ENCODE measurements at regions of chr19 and their contacts with region 1.

Region 1: DNA sequence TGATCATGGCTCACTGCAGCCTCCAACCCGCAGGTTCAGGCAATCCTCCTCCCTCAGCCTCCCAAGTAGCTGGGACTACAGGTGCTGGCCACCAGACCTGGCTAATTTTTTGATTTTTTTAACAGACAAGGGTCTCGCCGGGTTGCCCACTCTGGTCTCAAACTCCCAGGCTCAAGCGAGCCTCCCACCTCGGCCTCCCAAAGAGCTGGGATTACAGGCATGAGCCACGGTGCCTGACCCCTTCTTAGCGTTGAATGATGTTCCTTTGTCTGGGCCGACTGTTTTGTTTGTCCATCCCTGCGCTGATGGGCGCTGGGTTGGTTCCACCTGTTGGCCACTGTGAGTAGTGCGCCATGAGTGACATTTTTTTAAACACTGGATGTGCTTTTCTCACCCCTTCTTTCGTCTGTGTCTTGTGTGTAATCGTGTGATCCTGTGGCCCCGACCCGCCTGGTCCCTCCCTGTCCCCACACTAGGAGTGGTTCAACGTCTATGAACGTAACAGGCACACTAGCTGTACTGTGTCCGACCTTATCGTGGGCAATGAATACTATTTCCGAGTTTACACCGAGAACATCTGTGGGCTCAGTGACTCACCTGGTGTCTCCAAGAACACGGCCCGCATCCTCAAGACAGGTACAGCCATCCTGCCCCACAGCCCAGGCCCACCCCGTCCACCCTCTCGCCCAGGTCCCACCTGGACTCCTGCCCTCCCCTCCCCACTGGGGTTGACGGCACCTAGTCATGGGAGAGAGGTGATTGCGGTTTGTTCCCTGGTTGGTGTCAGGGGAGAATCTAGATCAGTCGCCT is 15.0 kb upstream of the EMC10 start:
- DNase-seq: peak; percentile 92
- CTCF ChIP-seq: peak; percentile 86

Region 2: GRCh38 chr19:50371914-50372475 is 89.3 kb before region 1 on chr19:
- in situ Hi-C with region 1: loop called (anchors 5 kb)
- DNase-seq: no peak
- CTCF ChIP-seq: no peak

Region 3: DNA sequence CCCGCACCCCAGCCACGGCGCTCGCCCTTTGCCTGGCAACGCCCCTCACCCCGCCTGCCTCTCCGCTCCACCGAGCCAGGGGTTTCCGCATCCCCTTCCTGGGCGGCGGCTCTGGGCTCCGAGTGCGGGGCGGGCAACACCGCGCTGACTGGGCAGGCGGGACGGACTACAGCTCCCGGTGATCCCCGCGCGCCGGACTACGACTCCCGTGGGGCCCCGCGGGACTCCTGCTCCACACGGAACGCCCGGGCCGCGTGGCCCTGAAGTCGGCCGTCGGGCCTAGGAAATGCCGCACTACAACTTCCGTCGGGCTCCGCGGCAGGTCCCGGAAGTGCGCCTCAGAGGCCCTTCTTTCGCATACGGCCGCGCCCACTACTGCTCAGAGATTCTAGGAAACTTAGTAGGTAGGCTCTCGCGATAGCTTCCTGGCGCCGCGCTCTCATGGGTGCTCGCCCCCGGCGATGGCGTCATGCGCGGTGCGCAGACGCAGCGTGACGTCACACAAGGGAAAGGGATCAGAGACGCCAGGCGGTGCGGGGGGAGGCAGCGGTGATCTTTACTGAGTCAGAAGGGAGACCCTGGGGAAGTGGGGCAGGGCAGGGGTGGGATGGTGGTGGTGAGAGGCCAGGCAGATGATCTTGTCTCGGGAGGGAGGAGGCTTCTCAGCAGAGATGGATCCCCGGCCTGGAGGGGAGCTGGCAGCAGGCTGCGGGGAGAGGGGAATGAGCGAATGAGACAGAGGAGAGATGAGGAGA is 50.0 kb after region 1 on chr19 and contains the start of gene JOSD2:
- in situ Hi-C with region 1: no loop called
- DNase-seq: peak; percentile 99
- CTCF ChIP-seq: no peak